Endothelial cell of umbilical vein (primary cell): ENCODE measurements at regions of chr6 and their contacts with region 1.

Region 1: DNA sequence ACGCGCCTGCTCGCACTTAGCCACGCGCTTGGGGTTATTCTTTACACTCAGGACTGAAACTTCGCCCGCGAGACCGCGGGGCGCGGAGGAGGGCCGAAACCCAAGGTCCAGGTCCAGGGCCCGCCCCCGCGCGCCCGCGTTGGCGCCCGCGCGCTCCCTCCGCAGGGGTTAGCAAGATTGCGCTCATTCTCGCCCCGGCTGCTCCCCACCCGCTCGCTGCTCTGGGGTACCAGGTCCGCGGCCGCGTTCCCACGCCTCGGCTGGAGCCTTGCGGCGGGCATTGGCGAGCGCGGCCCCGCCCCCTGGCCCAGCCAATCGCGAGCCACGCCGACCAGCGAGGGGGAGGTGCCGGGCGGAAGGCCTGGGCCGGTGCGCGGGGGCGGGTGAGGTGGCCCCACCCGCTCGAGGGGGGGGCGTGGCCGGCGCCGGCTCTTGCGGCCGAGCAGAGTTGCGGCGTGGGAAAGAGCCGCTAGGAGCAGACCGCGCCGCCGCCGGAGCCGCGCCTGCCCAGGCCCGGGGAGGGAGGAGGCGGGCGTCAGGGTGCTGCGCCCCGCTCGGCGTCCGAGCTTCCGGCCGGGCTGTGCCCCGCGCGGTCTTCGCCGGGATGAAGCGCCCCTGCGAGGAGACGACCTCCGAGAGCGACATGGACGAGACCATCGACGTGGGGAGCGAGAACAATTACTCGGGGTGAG is at the start of gene HEY2:
- DNase-seq: peak; percentile 83
- H3K4me3 ChIP-seq: peak within 1 kb of the TSS; percentile 55 to 73 (median 71)
- H3K27ac ChIP-seq: peak within 1 kb of the TSS; percentile 23
- H3K4me1 ChIP-seq: peaks cover 25% of the 10 kb centered on the region
- H3K27me3 ChIP-seq: peaks cover 64 to 66% of the 10 kb centered on the region in 2 experiments
- CTCF ChIP-seq: no peak
- POLR2A ChIP-seq: no peak
- total RNA-seq, gene HEY2: not detected in 2 replicates

Region 2: DNA sequence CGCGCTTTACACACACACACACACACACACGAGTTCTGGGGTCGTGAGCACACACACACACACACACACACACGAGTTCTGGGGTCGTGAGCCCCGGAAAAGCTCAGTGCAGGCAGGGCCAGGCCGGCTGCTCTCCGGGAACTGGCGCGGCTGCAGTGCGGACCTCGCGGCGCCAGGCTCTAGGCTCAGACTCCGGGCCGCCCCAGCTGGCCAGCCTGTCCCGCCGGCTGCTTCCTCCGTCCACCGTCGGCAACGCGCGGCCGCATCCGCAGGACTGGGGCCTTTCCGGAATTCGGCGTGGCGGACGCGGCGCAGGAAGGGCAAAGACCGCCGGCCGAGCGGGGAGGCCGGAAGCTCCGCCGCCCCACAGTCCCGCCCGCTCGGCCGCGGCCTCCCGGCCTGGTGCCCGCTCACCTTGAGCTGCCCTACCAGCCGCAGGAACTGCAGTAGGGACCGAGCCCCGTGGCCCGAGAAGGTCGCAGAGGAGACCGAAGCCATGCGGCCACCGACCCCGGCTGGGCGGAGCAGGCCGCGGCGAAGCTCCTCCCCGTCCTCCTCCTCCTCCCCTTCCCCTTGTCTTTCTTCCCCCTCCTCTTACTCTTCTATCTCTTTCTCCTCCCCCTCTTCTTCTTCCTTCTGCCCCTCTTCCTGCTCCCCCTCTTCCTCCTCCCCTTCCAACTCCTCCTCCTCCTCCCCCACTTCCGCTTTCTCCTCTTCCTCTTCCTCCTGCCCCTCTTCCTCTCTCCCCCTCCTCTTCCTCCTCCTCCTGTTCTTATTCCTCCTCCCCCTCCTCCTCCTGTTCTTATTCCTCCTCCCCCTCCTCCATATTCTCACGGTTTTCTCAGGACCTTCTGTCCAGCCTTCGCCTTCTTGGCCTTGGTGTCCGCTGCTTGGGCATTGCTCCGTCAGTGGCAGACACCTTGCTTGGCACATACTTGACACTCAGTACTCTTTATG is 447.6 kb before region 1 on chr6 and contains the start of gene HDDC2:
- CTCF ChIA-PET with region 1: interaction called, 6 read pairs
- POLR2A ChIA-PET with region 1: no interaction called
- dilution Hi-C with region 1: no loop called
- intact Hi-C with region 1: loop called (anchors 1 kb)
- DNase-seq: peak; percentile 78
- H3K4me3 ChIP-seq: peak within 1 kb of the TSS; percentile 10 to 56 (median 47)
- H3K27ac ChIP-seq: peak within 1 kb of the TSS; percentile 72
- H3K4me1 ChIP-seq: peaks cover 10% of the 10 kb centered on the region
- H3K27me3 ChIP-seq: peaks cover 8 to 12% of the 10 kb centered on the region in 2 experiments
- CTCF ChIP-seq: no peak
- POLR2A ChIP-seq: peak; percentile 49
- total RNA-seq, gene HDDC2: 12.6 and 13.6 TPM in 2 replicates

Region 3: GRCh38 chr6:125489579-125490285 is 259.6 kb before region 1 on chr6:
- CTCF ChIA-PET with region 1: no interaction called
- POLR2A ChIA-PET with region 1: no interaction called
- dilution Hi-C with region 1: no loop called
- intact Hi-C with region 1: loop called (anchors 2 kb)
- DNase-seq: peak; percentile 9
- H3K4me3 ChIP-seq: no peak overlapping the region
- H3K27ac ChIP-seq: peak overlapping the region; percentile 42
- H3K4me1 ChIP-seq: peaks cover 21% of the 10 kb centered on the region
- H3K27me3 ChIP-seq: no peaks in the 10 kb centered on the region
- CTCF ChIP-seq: no peak
- POLR2A ChIP-seq: no peak

Region 4: GRCh38 chr6:125584468-125585029 is 164.8 kb before region 1 on chr6:
- CTCF ChIA-PET with region 1: interaction called, 8 read pairs
- POLR2A ChIA-PET with region 1: no interaction called
- dilution Hi-C with region 1: no loop called
- intact Hi-C with region 1: loop called (anchors 1 kb)
- DNase-seq: peak; percentile 13
- H3K4me3 ChIP-seq: no peak overlapping the region
- H3K27ac ChIP-seq: no peak overlapping the region
- H3K4me1 ChIP-seq: peaks cover 41% of the 10 kb centered on the region
- H3K27me3 ChIP-seq: peaks cover 0 to 22% of the 10 kb centered on the region in 2 experiments
- CTCF ChIP-seq: no peak
- POLR2A ChIP-seq: no peak

Region 5: GRCh38 chr6:125769147-125769783 is 19.9 kb after region 1 on chr6:
- CTCF ChIA-PET with region 1: interaction called, 22 read pairs
- POLR2A ChIA-PET with region 1: no interaction called
- dilution Hi-C with region 1: no loop called
- intact Hi-C with region 1: no loop called
- DNase-seq: no peak
- H3K4me3 ChIP-seq: no peak overlapping the region
- H3K27ac ChIP-seq: no peak overlapping the region
- H3K4me1 ChIP-seq: no peaks in the 10 kb centered on the region
- H3K27me3 ChIP-seq: peaks cover 4 to 19% of the 10 kb centered on the region in 2 experiments
- CTCF ChIP-seq: no peak
- POLR2A ChIP-seq: no peak

Region 6: GRCh38 chr6:126268092-126268491 is 518.8 kb after region 1 on chr6:
- CTCF ChIA-PET with region 1: no interaction called
- POLR2A ChIA-PET with region 1: no interaction called
- dilution Hi-C with region 1: no loop called
- intact Hi-C with region 1: no loop called
- DNase-seq: no peak
- H3K4me3 ChIP-seq: no peak overlapping the region
- H3K27ac ChIP-seq: no peak overlapping the region
- H3K4me1 ChIP-seq: peaks cover 25% of the 10 kb centered on the region
- H3K27me3 ChIP-seq: no peaks in the 10 kb centered on the region
- CTCF ChIP-seq: no peak
- POLR2A ChIP-seq: no peak